CD8-positive, alpha-beta T cell (primary cell): ENCODE measurements at regions of chr2 and their contacts with region 1.

Region 1: DNA sequence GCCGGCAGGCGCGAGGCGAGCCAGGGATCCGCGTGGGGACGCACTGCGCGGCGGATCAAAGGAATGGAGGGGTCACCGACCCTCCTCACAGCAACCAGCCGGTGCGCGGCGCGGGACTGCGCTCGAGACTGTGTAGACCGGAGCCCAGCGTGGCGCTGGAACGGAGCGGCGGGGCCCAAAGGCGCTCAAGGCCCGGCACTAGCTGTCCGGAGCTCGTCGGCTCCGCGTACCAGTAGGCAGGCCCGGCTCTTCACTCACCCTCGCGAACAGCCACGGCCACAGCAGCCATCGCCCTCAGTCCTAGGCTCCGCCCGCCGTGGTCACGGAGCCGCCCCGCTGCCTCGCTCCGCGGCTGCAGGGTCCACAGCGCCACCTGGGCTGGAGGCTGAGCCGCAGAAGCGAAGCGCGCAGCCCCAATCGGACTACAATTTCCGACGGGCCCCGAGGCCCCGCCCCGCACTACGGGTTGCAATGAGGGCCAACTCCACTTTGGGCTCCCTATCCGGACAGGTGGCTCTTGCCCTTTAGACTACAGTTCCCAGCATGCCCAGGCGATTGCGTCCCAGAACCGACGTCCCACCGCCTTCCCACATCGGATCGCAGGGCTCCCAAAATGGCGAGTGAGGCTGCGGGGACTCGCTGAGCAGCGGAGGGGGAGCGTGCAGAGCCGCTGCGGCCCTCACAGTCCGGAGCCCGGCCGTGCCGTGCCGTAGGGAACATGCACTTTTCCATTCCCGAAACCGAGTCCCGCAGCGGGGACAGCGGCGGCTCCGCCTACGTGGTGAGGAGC is at the starts of genes EIF2B4 and SNX17:
- DNase-seq: peak; percentile 98 to 100 (median 99)
- ATAC-seq: peak; percentile 91
- H3K4me3 ChIP-seq: peak within 1 kb of the TSS; percentile 88 to 94
- H3K4me3 Mint-ChIP-seq: peak within 1 kb of the TSS; percentile 96
- H3K27ac ChIP-seq: peak within 1 kb of the TSS; percentile 76 to 88
- H3K27ac Mint-ChIP-seq: peak within 1 kb of the TSS; percentile 97
- H3K4me1 ChIP-seq: peaks cover 35% of the 10 kb centered on the region
- H3K4me1 Mint-ChIP-seq: peaks cover 36% of the 10 kb centered on the region
- H3K27me3 ChIP-seq: no peaks in the 10 kb centered on the region
- H3K27me3 Mint-ChIP-seq: no peaks in the 10 kb centered on the region
- CTCF ChIP-seq: peak; percentile 64
- total RNA-seq, gene EIF2B4: 39.7 to 39.9 TPM
- total RNA-seq, gene SNX17: 64.8 to 66.5 TPM

Region 2: DNA sequence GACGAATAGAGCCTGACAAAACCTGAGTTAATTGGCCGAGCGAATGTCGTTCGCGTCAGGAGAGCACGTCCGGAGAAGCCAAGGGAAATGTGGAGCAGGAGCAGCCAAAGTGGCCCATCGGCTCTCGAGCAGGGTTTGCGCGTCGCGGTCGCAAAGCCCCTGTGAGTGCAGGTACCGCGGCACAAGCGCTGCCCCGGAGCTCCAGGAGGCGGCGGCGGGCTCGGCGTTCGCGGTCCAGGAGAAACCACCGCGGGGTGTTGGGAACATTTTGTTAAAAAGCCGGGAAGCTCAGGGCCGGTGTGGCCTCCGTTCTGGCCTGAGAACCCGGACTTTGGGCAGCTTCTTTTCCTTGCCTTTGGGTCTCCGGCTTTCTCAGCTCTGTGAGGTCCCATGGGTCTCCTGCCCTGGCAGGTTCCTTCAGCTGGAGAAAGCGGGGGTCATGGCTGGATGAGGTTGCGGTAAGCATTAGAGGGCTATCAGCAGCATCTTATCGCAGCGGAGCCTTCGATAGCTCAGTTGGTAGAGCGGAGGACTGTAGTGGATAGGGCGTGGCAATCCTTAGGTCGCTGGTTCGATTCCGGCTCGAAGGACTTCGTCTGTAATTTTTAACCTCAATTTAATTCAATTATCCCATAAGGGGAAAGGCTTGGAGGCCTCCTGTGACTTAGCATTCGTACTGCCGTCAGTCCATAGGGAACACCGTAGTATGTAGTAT is 319.8 kb before region 1 on chr2:
- CTCF ChIA-PET with region 1: no interaction called
- POLR2A ChIA-PET with region 1: no interaction called
- intact Hi-C with region 1: loop called in 1 of 2 experiments (anchors 5 kb)
- DNase-seq: peak; percentile 85 to 97 (median 93)
- ATAC-seq: peak; percentile 64
- H3K4me3 ChIP-seq: peak overlapping the region; percentile 78 to 83
- H3K4me3 Mint-ChIP-seq: peak overlapping the region; percentile 99
- H3K27ac ChIP-seq: peak overlapping the region; percentile 74 to 88
- H3K27ac Mint-ChIP-seq: peak overlapping the region; percentile 99
- H3K4me1 ChIP-seq: peaks cover 10% of the 10 kb centered on the region
- H3K4me1 Mint-ChIP-seq: peaks cover 9% of the 10 kb centered on the region
- H3K27me3 ChIP-seq: no peaks in the 10 kb centered on the region
- H3K27me3 Mint-ChIP-seq: peaks cover 2% of the 10 kb centered on the region
- CTCF ChIP-seq: peak; percentile 28

Region 3: DNA sequence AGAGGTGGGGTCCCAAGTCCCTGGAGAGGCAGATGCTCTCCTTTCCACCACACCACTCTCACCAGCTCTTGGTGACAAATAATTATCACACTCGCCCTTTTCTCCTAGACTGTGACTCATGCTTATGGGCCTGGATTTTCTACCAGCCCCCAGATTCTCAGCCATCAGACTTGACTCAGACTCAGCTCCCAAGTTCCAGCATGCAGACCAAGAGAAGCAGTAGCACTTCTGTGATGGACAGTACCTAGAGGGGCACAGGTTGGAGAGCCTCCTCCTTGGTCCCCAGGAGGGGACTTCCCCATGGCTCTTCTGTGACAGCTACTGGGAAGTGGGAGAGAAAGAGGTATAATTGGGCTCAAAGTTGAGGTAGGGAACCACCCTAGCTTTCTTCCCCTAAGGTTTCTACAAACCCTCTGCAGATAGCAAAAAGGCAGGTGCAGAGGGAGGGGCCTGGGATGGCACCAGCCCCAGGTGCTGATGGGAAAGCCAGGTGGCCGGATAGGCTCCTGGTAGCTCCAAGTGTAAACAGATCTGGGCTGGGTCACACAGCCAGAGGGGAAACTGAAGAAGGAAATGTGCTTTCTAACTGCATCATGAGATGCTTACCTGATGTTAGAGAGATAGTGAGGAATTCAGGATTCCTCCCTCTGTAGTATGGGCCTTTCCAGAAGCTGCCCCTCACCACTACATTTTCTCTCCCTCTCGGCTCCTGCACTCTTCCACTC is 217.3 kb before region 1 on chr2:
- CTCF ChIA-PET with region 1: no interaction called
- POLR2A ChIA-PET with region 1: no interaction called
- intact Hi-C with region 1: no loop called
- DNase-seq: no peak
- ATAC-seq: no peak
- H3K4me3 ChIP-seq: no peak overlapping the region
- H3K4me3 Mint-ChIP-seq: no peak overlapping the region
- H3K27ac ChIP-seq: no peak overlapping the region
- H3K27ac Mint-ChIP-seq: no peak overlapping the region
- H3K4me1 ChIP-seq: no peaks in the 10 kb centered on the region
- H3K4me1 Mint-ChIP-seq: no peaks in the 10 kb centered on the region
- H3K27me3 ChIP-seq: no peaks in the 10 kb centered on the region
- H3K27me3 Mint-ChIP-seq: peaks cover 11% of the 10 kb centered on the region
- CTCF ChIP-seq: no peak

Region 4: DNA sequence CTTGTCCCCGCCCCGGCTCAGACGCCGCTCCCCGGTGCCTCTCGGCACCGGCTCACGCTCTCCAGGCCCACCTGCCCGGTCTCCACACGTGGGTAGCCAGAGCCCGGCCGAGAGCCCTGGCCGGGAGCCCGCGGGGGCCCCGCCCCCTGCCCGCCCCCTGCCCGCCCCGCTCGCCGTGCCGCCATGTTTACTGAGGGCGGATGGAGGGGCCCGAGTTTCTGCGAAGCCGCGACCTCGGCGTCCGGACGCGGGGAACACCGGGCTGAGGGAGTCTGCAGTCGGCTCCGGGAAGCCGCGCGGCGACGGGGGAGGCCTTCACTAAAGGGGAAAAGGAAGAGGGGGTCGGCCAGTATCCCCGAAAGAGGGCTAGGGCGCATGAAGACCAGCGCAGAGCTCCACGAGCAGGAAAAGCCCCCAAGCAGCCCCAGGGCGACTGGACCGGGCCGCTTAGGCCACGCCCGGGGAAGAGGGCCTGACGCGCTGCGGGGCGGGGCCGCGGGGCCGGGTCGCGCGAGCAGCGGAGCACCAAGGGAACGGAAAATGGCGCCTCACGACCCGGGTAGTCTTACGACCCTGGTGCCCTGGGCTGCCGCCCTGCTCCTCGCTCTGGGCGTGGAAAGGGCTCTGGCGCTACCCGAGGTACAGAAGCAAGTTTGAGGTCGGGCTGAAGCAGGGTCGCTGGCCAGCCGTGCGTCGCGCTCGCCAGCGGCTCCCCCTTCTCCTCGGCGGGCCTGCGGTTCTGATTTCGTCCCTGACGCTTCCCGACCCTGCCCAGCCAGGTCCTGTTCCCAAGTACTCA is 158.2 kb before region 1 on chr2 and contains the starts of genes ATRAID and SLC5A6:
- CTCF ChIA-PET with region 1: no interaction called
- POLR2A ChIA-PET with region 1: no interaction called
- intact Hi-C with region 1: loop called (anchors 1 to 5 kb)
- DNase-seq: peak; percentile 78 to 94 (median 87)
- ATAC-seq: peak; percentile 84
- H3K4me3 ChIP-seq: peak within 1 kb of the TSS; percentile 67 to 99
- H3K4me3 Mint-ChIP-seq: peak within 1 kb of the TSS; percentile 100
- H3K27ac ChIP-seq: peak within 1 kb of the TSS; percentile 97 to 100
- H3K27ac Mint-ChIP-seq: peak within 1 kb of the TSS; percentile 100
- H3K4me1 ChIP-seq: peaks cover 26% of the 10 kb centered on the region
- H3K4me1 Mint-ChIP-seq: peaks cover 44% of the 10 kb centered on the region
- H3K27me3 ChIP-seq: no peaks in the 10 kb centered on the region
- H3K27me3 Mint-ChIP-seq: no peaks in the 10 kb centered on the region
- CTCF ChIP-seq: no peak
- total RNA-seq, gene ATRAID: 70.0 to 71.7 TPM
- total RNA-seq, gene SLC5A6: 410 to 431 TPM

Region 5: GRCh38 chr2:27356382-27357181 is 13.6 kb before region 1 on chr2 and contains the start of gene GTF3C2:
- CTCF ChIA-PET with region 1: interaction called, 4 read pairs
- POLR2A ChIA-PET with region 1: interaction called, 28 read pairs
- intact Hi-C with region 1: loop called (anchors 1 kb)
- DNase-seq: peak; percentile 82 to 97 (median 93)
- ATAC-seq: peak; percentile 76
- H3K4me3 ChIP-seq: peak within 1 kb of the TSS; percentile 94 to 95
- H3K4me3 Mint-ChIP-seq: peak within 1 kb of the TSS; percentile 98
- H3K27ac ChIP-seq: peak within 1 kb of the TSS; percentile 87 to 95
- H3K27ac Mint-ChIP-seq: peak within 1 kb of the TSS; percentile 99
- H3K4me1 ChIP-seq: peaks cover 35% of the 10 kb centered on the region
- H3K4me1 Mint-ChIP-seq: peaks cover 51% of the 10 kb centered on the region
- H3K27me3 ChIP-seq: no peaks in the 10 kb centered on the region
- H3K27me3 Mint-ChIP-seq: no peaks in the 10 kb centered on the region
- CTCF ChIP-seq: no peak
- total RNA-seq, gene GTF3C2: 52.2 to 56.2 TPM

Region 6: GRCh38 chr2:27428213-27428977 is 58.2 kb after region 1 on chr2 and contains the start of gene NRBP1:
- CTCF ChIA-PET with region 1: interaction called, 11 read pairs
- POLR2A ChIA-PET with region 1: interaction called, 27 read pairs
- intact Hi-C with region 1: loop called (anchors 1 kb)
- DNase-seq: peak; percentile 80 to 95 (median 91)
- ATAC-seq: peak; percentile 91
- H3K4me3 ChIP-seq: peak within 1 kb of the TSS; percentile 81 to 92
- H3K4me3 Mint-ChIP-seq: peak within 1 kb of the TSS; percentile 97
- H3K27ac ChIP-seq: peak within 1 kb of the TSS; percentile 79 to 90
- H3K27ac Mint-ChIP-seq: peak within 1 kb of the TSS; percentile 97
- H3K4me1 ChIP-seq: peaks cover 29% of the 10 kb centered on the region
- H3K4me1 Mint-ChIP-seq: peaks cover 38% of the 10 kb centered on the region
- H3K27me3 ChIP-seq: no peaks in the 10 kb centered on the region
- H3K27me3 Mint-ChIP-seq: no peaks in the 10 kb centered on the region
- CTCF ChIP-seq: no peak
- total RNA-seq, gene NRBP1: 192 to 196 TPM

Region 7: GRCh38 chr2:27441226-27441926 is 71.2 kb after region 1 on chr2:
- CTCF ChIA-PET with region 1: no interaction called
- POLR2A ChIA-PET with region 1: no interaction called
- intact Hi-C with region 1: no loop called
- DNase-seq: no peak
- ATAC-seq: no peak
- H3K4me3 ChIP-seq: no peak overlapping the region
- H3K4me3 Mint-ChIP-seq: no peak overlapping the region
- H3K27ac ChIP-seq: no peak overlapping the region
- H3K27ac Mint-ChIP-seq: no peak overlapping the region
- H3K4me1 ChIP-seq: no peaks in the 10 kb centered on the region
- H3K4me1 Mint-ChIP-seq: peaks cover 2% of the 10 kb centered on the region
- H3K27me3 ChIP-seq: no peaks in the 10 kb centered on the region
- H3K27me3 Mint-ChIP-seq: no peaks in the 10 kb centered on the region
- CTCF ChIP-seq: no peak

Region 8: GRCh38 chr2:27628767-27629709 is 258.8 kb after region 1 on chr2 and contains the starts of genes CCDC121 and GPN1:
- CTCF ChIA-PET with region 1: interaction called, 3 read pairs
- POLR2A ChIA-PET with region 1: no interaction called
- intact Hi-C with region 1: loop called (anchors 1 to 2 kb)
- DNase-seq: peak; percentile 88 to 97 (median 95)
- ATAC-seq: peak; percentile 98
- H3K4me3 ChIP-seq: peak within 1 kb of the TSS; percentile 94 to 98
- H3K4me3 Mint-ChIP-seq: no peak within 1 kb of the TSS
- H3K27ac ChIP-seq: peak within 1 kb of the TSS; percentile 84 to 91
- H3K27ac Mint-ChIP-seq: peak within 1 kb of the TSS; percentile 46
- H3K4me1 ChIP-seq: peaks cover 18% of the 10 kb centered on the region
- H3K4me1 Mint-ChIP-seq: peaks cover 20% of the 10 kb centered on the region
- H3K27me3 ChIP-seq: no peaks in the 10 kb centered on the region
- H3K27me3 Mint-ChIP-seq: no peaks in the 10 kb centered on the region
- CTCF ChIP-seq: no peak
- total RNA-seq, gene CCDC121: 0.92 to 1.4 TPM
- total RNA-seq, gene GPN1: 40.6 to 41.7 TPM